ENCODE measurements at regions of chr10 and their contacts with region 1.

Region 1: DNA sequence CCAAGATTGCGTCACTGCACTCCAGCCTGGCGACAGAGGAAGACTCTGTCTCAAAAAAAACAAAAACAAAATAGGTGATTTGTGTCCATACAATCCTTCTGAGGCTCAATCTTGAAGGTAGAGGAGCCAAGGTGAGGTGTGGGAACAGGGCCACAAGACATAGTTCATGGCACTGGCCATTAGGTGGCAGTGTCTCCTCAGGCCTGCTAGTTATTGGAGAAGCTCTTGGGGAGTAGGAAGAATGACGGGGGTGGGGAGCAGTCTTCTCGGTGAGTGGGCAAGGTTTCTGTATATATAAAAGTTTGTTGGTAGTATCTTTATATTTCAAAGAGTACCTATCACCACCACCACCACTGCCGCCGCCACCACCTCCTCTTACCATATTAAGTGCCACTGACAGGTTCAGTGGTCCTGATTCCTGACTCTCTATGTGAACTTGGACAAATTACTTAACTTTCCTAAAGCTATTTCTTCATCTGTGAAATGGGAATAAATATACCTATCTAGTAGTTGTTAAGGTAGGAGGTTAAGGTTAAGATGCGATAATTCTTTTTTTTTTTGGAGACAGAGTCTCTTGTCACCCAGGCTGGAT is 24.0 kb downstream of the CCSER2 start:
- DNase-seq: peak; percentile 46 to 86 (median 72)
- ATAC-seq: peak; percentile 82
- H3K4me3 ChIP-seq: no peak overlapping the region
- H3K4me3 Mint-ChIP-seq: no peak overlapping the region
- H3K27ac ChIP-seq: no peak overlapping the region
- H3K27ac Mint-ChIP-seq: peak overlapping the region; percentile 71
- H3K4me1 ChIP-seq: peaks cover 50% of the 10 kb centered on the region
- H3K4me1 Mint-ChIP-seq: peaks cover 73% of the 10 kb centered on the region
- H3K27me3 ChIP-seq: no peaks in the 10 kb centered on the region
- H3K27me3 Mint-ChIP-seq: no peaks in the 10 kb centered on the region
- CTCF ChIP-seq: peak; percentile 69

Region 2: GRCh38 chr10:83373671-83374070 is 978.7 kb before region 1 on chr10:
- CTCF ChIA-PET with region 1: no interaction called
- POLR2A ChIA-PET with region 1: no interaction called
- intact Hi-C with region 1: no loop called
- DNase-seq: no peak
- ATAC-seq: no peak
- H3K4me3 ChIP-seq: no peak overlapping the region
- H3K4me3 Mint-ChIP-seq: no peak overlapping the region
- H3K27ac ChIP-seq: no peak overlapping the region
- H3K27ac Mint-ChIP-seq: no peak overlapping the region
- H3K4me1 ChIP-seq: no peaks in the 10 kb centered on the region
- H3K4me1 Mint-ChIP-seq: no peaks in the 10 kb centered on the region
- H3K27me3 ChIP-seq: no peaks in the 10 kb centered on the region
- H3K27me3 Mint-ChIP-seq: no peaks in the 10 kb centered on the region
- CTCF ChIP-seq: no peak

Region 3: GRCh38 chr10:84264611-84265141 is 87.7 kb before region 1 on chr10:
- CTCF ChIA-PET with region 1: interaction called, 40 read pairs
- POLR2A ChIA-PET with region 1: no interaction called
- intact Hi-C with region 1: loop called (anchors 1 to 2 kb)
- DNase-seq: peak; percentile 53 to 82 (median 75)
- ATAC-seq: peak; percentile 97
- H3K4me3 ChIP-seq: no peak overlapping the region
- H3K4me3 Mint-ChIP-seq: no peak overlapping the region
- H3K27ac ChIP-seq: no peak overlapping the region
- H3K27ac Mint-ChIP-seq: no peak overlapping the region
- H3K4me1 ChIP-seq: no peaks in the 10 kb centered on the region
- H3K4me1 Mint-ChIP-seq: peaks cover 11% of the 10 kb centered on the region
- H3K27me3 ChIP-seq: no peaks in the 10 kb centered on the region
- H3K27me3 Mint-ChIP-seq: peaks cover 23% of the 10 kb centered on the region
- CTCF ChIP-seq: peak; percentile 98

Region 4: GRCh38 chr10:84328418-84329195 is 23.7 kb before region 1 on chr10 and contains the start of gene CCSER2:
- CTCF ChIA-PET with region 1: interaction called, 20 read pairs
- POLR2A ChIA-PET with region 1: interaction called, 4 read pairs
- intact Hi-C with region 1: loop called in 1 of 2 experiments (anchors 2 kb)
- DNase-seq: peak; percentile 81 to 95 (median 90)
- ATAC-seq: peak; percentile 54
- H3K4me3 ChIP-seq: peak within 1 kb of the TSS; percentile 52 to 65
- H3K4me3 Mint-ChIP-seq: peak within 1 kb of the TSS; percentile 93
- H3K27ac ChIP-seq: peak within 1 kb of the TSS; percentile 87 to 88
- H3K27ac Mint-ChIP-seq: peak within 1 kb of the TSS; percentile 99
- H3K4me1 ChIP-seq: peaks cover 33% of the 10 kb centered on the region
- H3K4me1 Mint-ChIP-seq: peaks cover 40% of the 10 kb centered on the region
- H3K27me3 ChIP-seq: no peaks in the 10 kb centered on the region
- H3K27me3 Mint-ChIP-seq: no peaks in the 10 kb centered on the region
- CTCF ChIP-seq: no peak
- total RNA-seq, gene CCSER2: 141 to 143 TPM

Region 5: DNA sequence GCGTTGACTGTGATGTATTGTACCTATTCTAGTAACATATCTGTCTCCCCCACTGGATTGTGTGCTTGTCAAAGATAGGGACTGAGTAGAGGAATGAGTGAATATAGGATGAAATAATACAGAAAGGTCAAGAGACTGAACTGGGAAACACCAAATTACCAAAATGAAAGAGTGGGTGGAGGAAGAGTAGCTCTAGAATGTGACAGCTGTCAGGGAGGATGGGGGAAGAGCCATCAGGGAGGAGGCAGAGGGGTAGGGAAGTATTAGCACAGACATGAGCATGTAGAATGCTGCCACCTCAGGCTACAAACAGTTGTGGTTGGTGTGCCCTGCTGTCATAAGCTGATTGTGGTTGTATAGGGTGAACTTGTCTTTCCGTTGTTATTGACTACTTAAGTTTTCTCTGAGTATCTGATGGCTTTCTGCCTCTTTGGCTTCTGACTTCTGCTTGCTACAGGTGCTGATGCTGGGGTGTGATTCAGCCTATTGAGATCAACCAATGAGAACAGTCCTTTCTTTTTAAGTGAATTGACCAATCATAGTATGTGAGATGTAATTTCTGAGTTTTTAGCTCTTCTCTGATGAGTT is 18.4 kb before region 1 on chr10:
- CTCF ChIA-PET with region 1: interaction called, 20 read pairs
- POLR2A ChIA-PET with region 1: interaction called, 6 read pairs
- intact Hi-C with region 1: loop called (anchors 2 kb)
- DNase-seq: peak; percentile 51 to 96 (median 70)
- ATAC-seq: peak; percentile 76
- H3K4me3 ChIP-seq: peak overlapping the region; percentile 1 to 17
- H3K4me3 Mint-ChIP-seq: peak overlapping the region; percentile 51
- H3K27ac ChIP-seq: peak overlapping the region; percentile 57 to 86
- H3K27ac Mint-ChIP-seq: peak overlapping the region; percentile 91
- H3K4me1 ChIP-seq: peaks cover 66% of the 10 kb centered on the region
- H3K4me1 Mint-ChIP-seq: peaks cover 58% of the 10 kb centered on the region
- H3K27me3 ChIP-seq: no peaks in the 10 kb centered on the region
- H3K27me3 Mint-ChIP-seq: no peaks in the 10 kb centered on the region
- CTCF ChIP-seq: no peak

Region 6: DNA sequence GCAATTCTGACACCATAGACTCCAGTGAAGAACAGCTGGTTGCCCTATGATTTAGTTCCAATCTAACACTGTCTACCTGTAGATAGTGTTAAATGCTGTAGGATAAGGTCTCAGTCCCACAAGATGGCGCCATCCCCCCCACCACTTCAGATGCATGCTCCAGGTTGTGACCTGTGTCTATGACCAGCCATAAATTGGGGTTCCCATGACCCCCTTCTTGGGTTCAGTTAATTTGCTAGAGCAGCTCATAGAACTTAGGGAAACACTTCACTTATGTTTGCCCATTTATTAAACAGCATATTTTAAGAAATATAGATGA is 10.8 kb before region 1 on chr10:
- CTCF ChIA-PET with region 1: interaction called, 13 read pairs
- POLR2A ChIA-PET with region 1: interaction called, 4 read pairs
- intact Hi-C with region 1: loop called in 1 of 2 experiments (anchors 2 kb)
- DNase-seq: peak in 2 of 9 experiments; percentile 32 to 42
- ATAC-seq: no peak
- H3K4me3 ChIP-seq: no peak overlapping the region
- H3K4me3 Mint-ChIP-seq: peak overlapping the region; percentile 24
- H3K27ac ChIP-seq: no peak overlapping the region
- H3K27ac Mint-ChIP-seq: peak overlapping the region; percentile 73
- H3K4me1 ChIP-seq: peaks cover 63% of the 10 kb centered on the region
- H3K4me1 Mint-ChIP-seq: peaks cover 64% of the 10 kb centered on the region
- H3K27me3 ChIP-seq: no peaks in the 10 kb centered on the region
- H3K27me3 Mint-ChIP-seq: no peaks in the 10 kb centered on the region
- CTCF ChIP-seq: no peak

Region 7: DNA sequence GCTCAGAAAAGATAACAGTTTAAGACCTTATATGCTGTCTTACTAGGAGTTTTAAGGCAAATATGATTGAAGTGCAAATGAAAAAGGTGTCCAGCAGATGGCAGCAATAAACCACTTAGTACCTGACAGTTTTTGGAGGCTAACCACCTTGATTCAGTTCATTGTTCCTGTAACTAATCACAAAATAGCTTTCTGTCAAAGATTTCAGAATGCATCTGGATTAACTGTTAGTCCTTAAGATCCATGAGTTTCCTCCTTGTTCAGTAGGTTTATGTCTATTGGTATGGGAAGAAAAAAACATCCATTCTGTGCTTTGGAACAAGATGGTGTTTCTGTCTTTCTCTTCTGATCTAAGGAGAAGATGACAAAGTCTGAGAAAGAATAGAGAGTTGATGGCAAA is 22.7 kb after region 1 on chr10:
- CTCF ChIA-PET with region 1: interaction called, 9 read pairs
- POLR2A ChIA-PET with region 1: no interaction called
- intact Hi-C with region 1: loop called (anchors 1 kb)
- DNase-seq: peak in 5 of 9 experiments; percentile 24 to 79 (median 51)
- ATAC-seq: peak; percentile 74
- H3K4me3 ChIP-seq: no peak overlapping the region
- H3K4me3 Mint-ChIP-seq: no peak overlapping the region
- H3K27ac ChIP-seq: no peak overlapping the region
- H3K27ac Mint-ChIP-seq: peak overlapping the region; percentile 70
- H3K4me1 ChIP-seq: peaks cover 4% of the 10 kb centered on the region
- H3K4me1 Mint-ChIP-seq: peaks cover 60% of the 10 kb centered on the region
- H3K27me3 ChIP-seq: no peaks in the 10 kb centered on the region
- H3K27me3 Mint-ChIP-seq: no peaks in the 10 kb centered on the region
- CTCF ChIP-seq: peak; percentile 68

Region 8: DNA sequence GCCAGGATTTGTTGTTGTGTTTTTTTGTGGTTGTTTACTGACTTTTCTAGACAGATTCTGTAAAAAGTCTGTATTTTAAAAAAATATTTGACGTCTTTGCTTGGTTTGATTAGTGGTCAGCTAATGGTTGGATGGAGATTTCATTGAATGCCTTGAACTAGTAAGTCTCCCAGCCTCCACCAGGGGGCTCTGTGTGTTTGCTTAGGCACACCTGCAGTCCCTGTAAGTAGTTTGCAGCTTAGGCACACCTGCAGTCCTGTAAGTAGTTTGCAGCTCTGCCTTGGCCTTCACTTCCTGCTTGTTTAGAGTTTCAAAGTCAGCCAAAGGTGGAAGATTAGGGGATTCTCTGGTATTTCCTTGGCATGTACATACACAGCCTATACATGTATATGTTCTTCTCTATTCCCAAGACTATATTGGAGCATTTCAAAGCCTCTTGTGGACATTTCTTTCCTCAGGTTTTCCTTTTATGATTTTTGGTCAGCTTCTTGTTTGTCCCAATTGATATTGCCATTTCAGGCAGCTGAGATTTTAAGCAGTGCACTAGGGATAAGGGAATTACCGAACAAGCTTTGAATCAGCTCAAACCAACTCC is 77.7 kb after region 1 on chr10:
- CTCF ChIA-PET with region 1: interaction called, 3 read pairs
- POLR2A ChIA-PET with region 1: no interaction called
- intact Hi-C with region 1: loop called in 1 of 2 experiments (anchors 1 kb)
- DNase-seq: peak; percentile 32 to 75 (median 67)
- ATAC-seq: peak; percentile 87
- H3K4me3 ChIP-seq: no peak overlapping the region
- H3K4me3 Mint-ChIP-seq: no peak overlapping the region
- H3K27ac ChIP-seq: no peak overlapping the region
- H3K27ac Mint-ChIP-seq: peak overlapping the region; percentile 20
- H3K4me1 ChIP-seq: peaks cover 15% of the 10 kb centered on the region
- H3K4me1 Mint-ChIP-seq: peaks cover 64% of the 10 kb centered on the region
- H3K27me3 ChIP-seq: no peaks in the 10 kb centered on the region
- H3K27me3 Mint-ChIP-seq: no peaks in the 10 kb centered on the region
- CTCF ChIP-seq: peak; percentile 78